ENCODE measurements at regions of chr10 and their contacts with region 1.

Region 1: GRCh38 chr10:115706026-115706781 is 566.8 kb downstream of the GFRA1 start:
- DNase-seq: no peak
- H3K4me3 ChIP-seq: no peak overlapping the region
- H3K27ac ChIP-seq: no peak overlapping the region
- H3K4me1 ChIP-seq: no peaks in the 10 kb centered on the region
- H3K27me3 ChIP-seq: no peaks in the 10 kb centered on the region
- CTCF ChIP-seq: peak in 4 of 5 experiments; percentile 17 to 42 (median 29)
- EP300 ChIP-seq: no peak
- POLR2A ChIP-seq: no peak

Region 2: DNA sequence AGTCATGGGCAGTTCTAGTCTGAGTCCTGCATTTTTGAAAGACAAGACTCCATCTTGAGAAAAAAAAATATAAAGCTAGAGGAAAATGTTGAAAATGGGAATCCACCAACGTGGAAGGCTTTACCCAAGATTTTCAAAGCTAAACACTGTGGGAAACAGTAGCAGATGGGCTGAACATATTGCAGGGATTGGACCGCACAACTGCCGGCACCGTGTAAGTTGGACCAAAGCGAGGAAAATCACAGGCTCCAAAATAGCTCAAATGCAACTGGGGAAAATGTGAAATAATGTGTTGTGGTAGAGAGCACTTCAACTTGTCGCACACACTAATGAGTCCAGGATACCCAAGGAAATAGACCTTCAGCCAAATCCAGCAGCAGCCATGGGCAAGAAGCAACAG is 1688.9 kb before region 1 on chr10:
- in situ Hi-C with region 1: no loop called
- intact Hi-C with region 1: loop called (anchors 10 kb)
- DNase-seq: no peak
- H3K4me3 ChIP-seq: no peak overlapping the region
- H3K27ac ChIP-seq: no peak overlapping the region
- H3K4me1 ChIP-seq: no peaks in the 10 kb centered on the region
- H3K27me3 ChIP-seq: no peaks in the 10 kb centered on the region
- CTCF ChIP-seq: no peak
- EP300 ChIP-seq: no peak
- POLR2A ChIP-seq: no peak

Region 3: GRCh38 chr10:114403541-114404161 is 1302.6 kb before region 1 on chr10:
- in situ Hi-C with region 1: no loop called
- intact Hi-C with region 1: loop called (anchors 5 kb)
- DNase-seq: peak; percentile 24
- H3K4me3 ChIP-seq: peak overlapping the region; percentile 20 to 51 (median 50)
- H3K27ac ChIP-seq: peak overlapping the region; percentile 66 to 80 (median 75)
- H3K4me1 ChIP-seq: peaks cover 9 to 32% (median 21%) of the 10 kb centered on the region in 4 donors
- H3K27me3 ChIP-seq: peaks cover 25% of the 10 kb centered on the region
- CTCF ChIP-seq: peak in 1 of 5 experiments; percentile 18
- EP300 ChIP-seq: no peak
- POLR2A ChIP-seq: no peak

Region 4: DNA sequence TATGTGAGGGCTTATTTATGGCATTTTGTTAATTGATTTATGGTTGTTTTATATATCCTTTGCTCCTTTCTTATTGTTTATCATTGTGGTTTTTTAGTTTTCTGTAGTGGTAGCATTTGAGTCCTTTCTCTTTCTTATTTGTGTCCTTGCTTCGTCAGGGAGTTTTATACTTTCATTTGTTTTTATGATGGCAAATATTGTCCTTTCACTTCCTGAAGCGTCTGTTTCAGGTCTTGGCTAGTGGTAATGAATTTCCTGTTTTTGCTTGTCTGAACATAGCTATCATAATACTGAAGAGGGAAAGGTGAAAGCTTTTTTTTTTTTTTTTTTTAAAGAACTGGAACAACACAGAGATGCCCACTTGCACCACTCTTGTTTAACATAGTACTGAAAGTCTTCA is 384.8 kb before region 1 on chr10:
- in situ Hi-C with region 1: no loop called
- intact Hi-C with region 1: no loop called
- DNase-seq: no peak
- H3K4me3 ChIP-seq: no peak overlapping the region
- H3K27ac ChIP-seq: no peak overlapping the region
- H3K4me1 ChIP-seq: no peaks in the 10 kb centered on the region
- H3K27me3 ChIP-seq: no peaks in the 10 kb centered on the region
- CTCF ChIP-seq: no peak
- EP300 ChIP-seq: no peak
- POLR2A ChIP-seq: no peak

Region 5: DNA sequence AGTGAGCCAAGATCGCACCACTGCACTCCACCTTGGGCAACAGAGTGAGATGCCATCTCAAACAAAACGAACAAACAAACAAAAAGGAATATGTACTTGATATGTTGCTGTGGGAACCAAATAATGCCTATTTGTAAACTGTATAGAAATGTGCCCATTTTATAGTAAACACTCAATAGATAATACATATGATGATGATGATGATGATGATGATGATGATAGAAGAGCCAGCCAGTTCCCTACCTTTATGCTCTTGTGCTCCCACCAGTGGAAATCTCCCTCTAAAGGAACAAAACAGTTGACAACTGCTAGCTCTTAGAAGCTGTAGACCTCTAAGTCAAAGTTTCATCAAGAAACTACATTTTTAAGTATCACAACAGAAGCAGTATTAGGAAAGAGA is 23.7 kb before region 1 on chr10:
- in situ Hi-C with region 1: no loop called
- intact Hi-C with region 1: no loop called
- DNase-seq: no peak
- H3K4me3 ChIP-seq: no peak overlapping the region
- H3K27ac ChIP-seq: no peak overlapping the region
- H3K4me1 ChIP-seq: no peaks in the 10 kb centered on the region
- H3K27me3 ChIP-seq: no peaks in the 10 kb centered on the region
- CTCF ChIP-seq: no peak
- EP300 ChIP-seq: no peak
- POLR2A ChIP-seq: no peak

Region 6: GRCh38 chr10:115747811-115748210 is 41.6 kb after region 1 on chr10:
- in situ Hi-C with region 1: no loop called
- intact Hi-C with region 1: no loop called
- DNase-seq: no peak
- H3K4me3 ChIP-seq: no peak overlapping the region
- H3K27ac ChIP-seq: no peak overlapping the region
- H3K4me1 ChIP-seq: no peaks in the 10 kb centered on the region
- H3K27me3 ChIP-seq: no peaks in the 10 kb centered on the region
- CTCF ChIP-seq: no peak
- EP300 ChIP-seq: no peak
- POLR2A ChIP-seq: no peak

Measured in transverse colon (tissue), 4 donors.